ENCODE measurements at regions of chr9 and their contacts with region 1.

Region 1: DNA sequence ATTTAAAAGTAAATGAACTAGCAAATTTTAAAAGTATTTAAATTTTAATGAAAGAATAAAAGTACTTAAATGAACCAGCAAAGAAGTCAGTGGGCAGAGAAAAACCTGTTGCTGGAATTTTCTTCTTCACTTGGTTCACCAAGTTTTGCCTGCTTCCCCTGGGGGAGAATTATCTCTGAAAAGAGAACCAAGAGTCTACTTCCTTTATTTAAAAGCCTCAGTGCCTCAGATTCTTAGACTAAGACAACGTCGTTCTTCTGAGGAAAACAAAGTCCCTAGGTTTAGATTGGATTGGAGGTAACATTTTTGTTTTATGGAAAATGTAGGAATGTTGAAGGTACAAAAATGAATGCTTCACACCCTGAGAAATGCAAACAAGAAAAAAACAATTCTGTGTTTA is 7.4 kb upstream of the KLF4 start:
- H3K4me3 Mint-ChIP-seq: no peak overlapping the region
- H3K27ac Mint-ChIP-seq: no peak overlapping the region
- H3K4me1 Mint-ChIP-seq: peaks cover 26% of the 10 kb centered on the region
- H3K27me3 Mint-ChIP-seq: peaks cover 8% of the 10 kb centered on the region

Region 2: DNA sequence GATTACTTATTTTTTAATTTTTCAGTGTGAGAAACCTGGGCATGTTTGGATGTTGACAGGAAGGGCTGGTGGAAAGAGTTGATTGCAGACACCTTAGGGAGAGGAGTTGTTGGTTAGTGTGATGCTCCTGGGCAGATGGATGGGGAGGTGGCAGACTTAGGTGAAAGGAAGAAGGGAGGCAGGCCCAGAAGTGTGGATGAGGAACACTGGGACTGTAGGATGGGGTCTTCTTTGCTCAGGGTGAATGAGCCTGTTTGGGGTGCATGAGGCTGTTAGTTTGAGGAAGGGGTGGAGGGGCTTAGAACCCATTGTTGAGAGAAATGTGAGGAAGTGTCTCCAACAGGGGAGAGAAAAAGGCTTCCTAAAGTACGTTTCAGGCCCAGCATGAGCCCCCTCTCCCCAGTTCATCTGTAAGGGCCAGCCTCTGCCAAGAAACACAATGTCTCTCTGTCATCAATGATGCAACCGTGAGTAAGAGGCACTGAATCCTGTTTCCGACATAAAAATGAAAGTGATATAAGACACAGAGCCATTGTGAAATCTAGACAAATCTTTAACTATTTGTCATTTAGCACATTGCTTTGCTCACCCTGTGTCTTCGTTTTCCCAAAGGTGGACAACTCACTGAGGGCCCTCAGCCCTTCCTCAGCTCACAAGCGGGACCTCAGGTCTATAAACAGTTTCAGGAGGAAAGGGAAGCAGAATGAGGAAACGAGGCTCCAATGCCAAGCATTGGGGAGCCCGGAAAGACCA is 51.2 kb after region 1 on chr9:
- intact Hi-C with region 1: loop called (anchors 5 kb)
- H3K4me3 Mint-ChIP-seq: peak overlapping the region; percentile 9
- H3K27ac Mint-ChIP-seq: peak overlapping the region; percentile 82
- H3K4me1 Mint-ChIP-seq: peaks cover 26% of the 10 kb centered on the region
- H3K27me3 Mint-ChIP-seq: no peaks in the 10 kb centered on the region

Region 3: DNA sequence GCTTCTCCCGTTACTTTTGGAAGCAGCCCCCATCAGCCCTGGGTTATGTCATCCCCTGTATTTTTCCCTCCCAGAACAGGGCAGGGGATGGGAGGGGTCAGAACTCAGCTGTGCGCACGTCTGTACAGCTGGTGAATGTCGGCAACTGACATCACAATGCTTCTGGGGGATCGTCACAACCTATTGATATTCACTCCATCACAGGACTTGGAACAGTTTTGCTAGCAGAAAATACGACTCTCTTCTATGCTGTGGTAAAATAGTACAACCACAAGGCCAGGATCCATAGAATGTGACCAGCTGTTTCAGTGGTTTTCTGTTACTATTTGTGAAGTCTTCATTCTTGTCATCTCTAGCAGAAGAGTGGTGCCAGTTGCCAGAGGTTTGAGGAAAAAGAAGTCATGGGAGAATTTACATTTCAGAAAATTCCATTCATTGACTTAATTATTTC is 69.7 kb after region 1 on chr9:
- intact Hi-C with region 1: no loop called
- H3K4me3 Mint-ChIP-seq: no peak overlapping the region
- H3K27ac Mint-ChIP-seq: no peak overlapping the region
- H3K4me1 Mint-ChIP-seq: peaks cover 10% of the 10 kb centered on the region
- H3K27me3 Mint-ChIP-seq: no peaks in the 10 kb centered on the region

Measured in dendritic cell treated with granulocyte-macrophage colony-stimulating factor and Interleukin-4, amounts not matched to agents 40 ng/mL and 50 ng/mL, for 4 days (primary cell).